AG04449 (cell line): ENCODE measurements at regions of chr5 and their contacts with region 1.

Region 1: GRCh38 chr5:135426102-135427082 is 20.8 kb downstream of the DCANP1 start:
- DNase-seq: no peak
- H3K4me3 ChIP-seq: no peak overlapping the region
- CTCF ChIP-seq: peak; percentile 68

Region 2: DNA sequence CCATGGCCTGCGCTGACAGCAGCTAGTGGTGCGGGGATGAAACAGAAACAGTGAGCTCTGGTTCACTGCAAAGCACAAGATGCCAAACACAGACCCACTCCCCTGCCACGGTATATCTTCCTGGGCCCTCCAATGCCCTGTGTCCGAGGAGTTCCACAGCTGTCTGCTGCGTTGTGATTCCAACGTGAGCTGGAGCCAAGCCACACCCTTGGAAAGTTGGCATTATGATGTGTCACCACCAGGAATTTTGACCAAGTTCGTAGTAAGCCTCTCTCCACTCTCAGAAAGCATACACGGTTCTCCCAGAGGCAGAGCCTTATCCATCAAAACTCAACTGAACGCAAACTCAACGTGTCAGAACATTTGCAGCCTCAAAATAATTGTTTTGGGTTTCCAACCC is 83.0 kb before region 1 on chr5:
- CTCF ChIA-PET with region 1: interaction called, 11 read pairs
- POLR2A ChIA-PET with region 1: no interaction called
- DNase-seq: no peak
- H3K4me3 ChIP-seq: no peak overlapping the region
- CTCF ChIP-seq: no peak

Region 3: DNA sequence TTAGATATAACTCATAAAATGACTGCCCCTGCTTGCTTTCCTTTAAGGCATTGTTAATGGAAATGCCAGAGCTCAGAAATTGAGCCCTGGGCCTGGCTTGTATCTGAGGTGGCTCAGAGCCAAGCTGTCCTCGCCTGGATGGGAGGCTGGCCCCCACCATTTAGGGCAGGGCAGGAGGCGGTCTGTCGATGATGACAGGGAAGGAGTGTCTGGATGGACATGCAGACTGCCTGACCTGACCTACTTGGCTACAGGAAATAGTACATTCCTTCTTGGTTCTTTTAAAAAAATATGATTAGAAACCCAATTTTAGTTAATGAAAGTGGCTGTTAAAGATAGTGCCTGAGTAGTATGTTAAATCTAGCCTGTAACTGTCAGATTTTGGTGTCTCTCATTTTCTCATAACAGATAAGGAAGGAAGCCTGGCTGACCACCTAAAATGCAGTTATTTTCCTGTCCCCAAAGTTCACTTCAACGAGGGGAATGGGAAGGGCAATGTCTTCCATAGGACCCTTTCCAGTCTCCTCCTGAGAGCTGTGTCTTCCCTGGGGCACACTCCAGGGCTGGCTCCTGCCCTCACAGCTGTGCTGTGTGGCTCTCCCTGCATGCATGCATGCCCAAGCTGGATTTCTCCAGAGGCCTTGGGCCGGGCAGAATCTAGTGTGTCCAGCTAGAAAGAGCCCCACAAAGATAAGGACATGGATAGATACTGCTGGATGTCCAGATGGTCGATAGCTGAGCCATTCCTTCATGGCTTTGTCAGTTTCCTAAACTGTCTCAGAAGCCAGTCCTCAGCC is 69.7 kb before region 1 on chr5:
- CTCF ChIA-PET with region 1: interaction called, 48 read pairs
- POLR2A ChIA-PET with region 1: no interaction called
- DNase-seq: no peak
- H3K4me3 ChIP-seq: no peak overlapping the region
- CTCF ChIP-seq: no peak

Region 4: GRCh38 chr5:135410348-135410747 is 16.0 kb before region 1 on chr5:
- CTCF ChIA-PET with region 1: interaction called, 54 read pairs
- POLR2A ChIA-PET with region 1: no interaction called
- DNase-seq: no peak
- H3K4me3 ChIP-seq: no peak overlapping the region
- CTCF ChIP-seq: no peak

Region 5: DNA sequence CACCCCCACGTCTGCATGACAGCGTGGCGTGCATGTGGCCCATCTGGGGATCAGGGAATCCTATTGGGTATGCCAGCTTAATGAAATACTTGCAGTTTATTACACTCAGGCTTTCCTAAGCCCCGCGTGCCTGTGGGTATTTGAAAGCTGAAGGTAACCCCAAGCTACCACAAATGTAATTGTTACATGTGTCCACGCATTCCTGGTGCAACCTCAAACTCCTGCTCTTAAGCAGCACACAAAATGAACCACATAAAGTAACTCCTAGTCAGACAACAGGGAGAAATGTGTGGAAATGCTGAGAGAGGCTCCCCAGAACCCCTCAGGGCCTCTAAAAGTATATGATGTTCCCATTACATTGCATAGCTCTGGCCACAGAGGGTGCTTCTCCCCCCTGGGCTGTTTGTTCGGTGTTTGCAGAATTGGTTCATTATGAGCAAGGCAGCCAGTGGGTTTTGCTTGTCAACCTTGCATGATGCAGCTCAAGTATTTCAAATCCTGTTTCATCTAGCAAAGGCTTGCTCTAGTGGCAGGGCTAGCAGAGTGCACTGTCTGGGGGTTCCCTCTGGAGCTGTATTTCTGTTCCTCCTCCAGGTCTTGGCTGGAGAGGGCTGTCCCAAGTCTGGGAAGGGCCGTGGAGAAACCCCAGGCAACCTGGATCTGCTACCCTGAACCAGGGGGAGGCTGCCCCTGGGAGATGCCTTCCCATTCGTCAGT is 22.6 kb after region 1 on chr5:
- CTCF ChIA-PET with region 1: interaction called, 26 read pairs
- POLR2A ChIA-PET with region 1: no interaction called
- DNase-seq: no peak
- H3K4me3 ChIP-seq: no peak overlapping the region
- CTCF ChIP-seq: no peak

Region 6: GRCh38 chr5:136141561-136141960 is 715.2 kb after region 1 on chr5:
- CTCF ChIA-PET with region 1: no interaction called
- POLR2A ChIA-PET with region 1: no interaction called
- DNase-seq: no peak
- H3K4me3 ChIP-seq: no peak overlapping the region
- CTCF ChIP-seq: no peak